ENCODE measurements at regions of chr3 and their contacts with region 1.

Region 1: GRCh38 chr3:71064288-71064955 is 519.1 kb downstream of the FOXP1 start:
- DNase-seq: peak; percentile 62
- ATAC-seq: peak; percentile 52 to 70
- H3K4me3 ChIP-seq: peak overlapping the region; percentile 65
- H3K27ac ChIP-seq: peak overlapping the region; percentile 93
- H3K4me1 ChIP-seq: peaks cover 71% of the 10 kb centered on the region
- H3K27me3 ChIP-seq: no peaks in the 10 kb centered on the region
- CTCF ChIP-seq: no peak

Region 2: GRCh38 chr3:71129611-71130431 is 65.4 kb after region 1 on chr3:
- intact Hi-C with region 1: loop called (anchors 10 kb)
- DNase-seq: no peak
- ATAC-seq: peak in 1 of 2 donors; percentile 20
- H3K4me3 ChIP-seq: peak overlapping the region; percentile 56
- H3K27ac ChIP-seq: peak overlapping the region; percentile 88
- H3K4me1 ChIP-seq: peaks cover 69% of the 10 kb centered on the region
- H3K27me3 ChIP-seq: no peaks in the 10 kb centered on the region
- CTCF ChIP-seq: no peak

Measured in lower lobe of right lung (tissue), 2 donors.